Activated CD4-positive, alpha-beta T cell treated with anti-CD3 and anti-CD28 coated beads for 36 hours (primary cell): ENCODE measurements at regions of chr2 and their contacts with region 1.

Region 1: DNA sequence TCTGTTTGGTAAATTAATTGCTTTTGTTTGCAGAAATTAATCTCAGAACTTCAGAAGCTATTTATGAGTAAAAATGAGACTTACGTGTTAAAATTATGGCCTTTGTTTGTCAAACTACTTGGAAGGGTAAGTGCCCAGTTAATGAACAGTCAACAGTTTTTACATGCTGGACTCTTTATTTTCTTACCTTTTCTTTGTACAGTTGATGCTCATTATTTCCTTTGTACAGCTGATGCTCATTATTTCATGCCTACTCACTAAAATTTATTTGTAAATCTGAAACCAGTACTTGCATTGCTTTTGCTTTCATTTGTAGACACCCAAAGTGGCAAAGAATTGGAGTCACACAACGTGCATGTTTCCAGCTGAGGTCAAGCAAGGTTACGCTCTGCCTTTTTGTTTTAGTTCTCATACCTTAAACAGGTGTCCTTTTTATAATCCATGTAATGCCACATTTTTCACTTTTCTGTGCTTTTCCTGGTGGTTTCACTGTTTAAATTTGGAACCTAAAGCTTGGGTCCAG is 13.3 kb downstream of the RIF1 start:
- DNase-seq: peak; percentile 29
- ATAC-seq: peak; percentile 68
- H3K4me3 Mint-ChIP-seq: no peak overlapping the region
- H3K27ac Mint-ChIP-seq: peak overlapping the region; percentile 56
- H3K4me1 Mint-ChIP-seq: peaks cover 41% of the 10 kb centered on the region
- H3K27me3 Mint-ChIP-seq: no peaks in the 10 kb centered on the region

Region 2: DNA sequence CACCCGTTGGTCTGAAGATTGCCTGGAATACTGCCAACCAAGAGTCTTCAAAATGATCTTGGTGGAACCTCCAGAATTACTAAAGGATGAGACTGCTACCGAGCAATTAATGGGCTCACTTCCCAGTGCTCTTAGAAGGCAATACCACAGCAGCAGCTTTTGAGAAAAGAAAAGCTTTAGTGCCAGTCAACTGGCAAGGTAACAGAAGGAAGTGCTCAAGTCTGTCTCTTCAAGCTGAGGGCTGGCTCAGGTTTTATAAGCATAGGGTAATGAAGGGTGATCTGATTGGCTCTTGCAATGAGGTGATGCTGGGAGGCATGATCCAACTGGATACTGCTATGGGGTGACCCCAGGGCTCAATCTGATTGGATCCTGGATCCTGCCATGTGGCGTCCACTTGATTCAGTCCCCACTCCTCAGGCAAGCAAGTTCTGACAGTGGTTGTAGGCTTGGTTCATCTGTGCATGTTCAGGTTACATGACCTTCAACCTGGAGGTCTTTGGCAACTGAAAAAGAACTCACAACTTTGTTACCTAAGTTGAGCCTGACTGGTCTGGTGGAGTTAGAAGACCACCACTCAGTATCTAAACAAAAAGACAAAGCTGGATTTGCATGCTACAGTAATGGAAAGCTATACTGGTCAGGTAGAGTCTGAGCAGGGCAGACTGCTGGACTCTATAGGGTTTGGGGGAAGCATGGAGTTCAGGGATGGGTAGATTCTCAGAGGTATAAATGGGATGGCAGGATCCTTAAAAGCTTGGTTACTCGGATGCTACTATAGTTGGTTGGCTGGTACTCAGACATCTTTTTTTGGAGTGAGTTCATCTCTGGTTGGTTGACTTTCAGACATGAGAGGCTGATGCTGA is 27.2 kb before region 1 on chr2:
- CTCF ChIA-PET with region 1: no interaction called
- POLR2A ChIA-PET with region 1: no interaction called
- intact Hi-C with region 1: no loop called
- DNase-seq: no peak
- ATAC-seq: no peak
- H3K4me3 Mint-ChIP-seq: no peak overlapping the region
- H3K27ac Mint-ChIP-seq: no peak overlapping the region
- H3K4me1 Mint-ChIP-seq: no peaks in the 10 kb centered on the region
- H3K27me3 Mint-ChIP-seq: no peaks in the 10 kb centered on the region

Region 3: GRCh38 chr2:151437630-151438029 is 14.7 kb after region 1 on chr2:
- CTCF ChIA-PET with region 1: interaction called, 25 read pairs
- POLR2A ChIA-PET with region 1: interaction called, 4 read pairs
- intact Hi-C with region 1: no loop called
- DNase-seq: no peak
- ATAC-seq: peak; percentile 70
- H3K4me3 Mint-ChIP-seq: no peak overlapping the region
- H3K27ac Mint-ChIP-seq: no peak overlapping the region
- H3K4me1 Mint-ChIP-seq: peaks cover 2% of the 10 kb centered on the region
- H3K27me3 Mint-ChIP-seq: no peaks in the 10 kb centered on the region

Region 4: DNA sequence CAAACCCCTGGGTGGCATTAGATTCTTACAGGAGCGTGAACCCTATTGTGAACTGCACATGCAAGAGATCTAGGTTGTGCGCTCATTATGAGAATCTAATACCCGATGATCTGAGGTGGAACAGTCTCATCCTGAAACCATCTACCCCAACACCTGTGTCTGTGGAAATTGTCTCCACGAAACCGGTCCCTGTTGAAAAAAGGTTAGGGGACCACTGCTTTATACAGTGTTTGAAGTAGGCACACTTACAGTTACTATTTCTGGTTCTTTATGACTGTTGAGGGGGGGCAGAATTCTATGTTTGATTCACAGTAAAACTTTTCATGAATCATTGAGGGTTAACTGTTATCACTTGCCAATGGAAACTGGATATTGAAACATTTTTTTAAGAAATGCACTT is 58.8 kb after region 1 on chr2:
- CTCF ChIA-PET with region 1: no interaction called
- POLR2A ChIA-PET with region 1: no interaction called
- intact Hi-C with region 1: loop called in 1 of 2 experiments (anchors 5 kb)
- DNase-seq: peak; percentile 62
- ATAC-seq: peak; percentile 84
- H3K4me3 Mint-ChIP-seq: no peak overlapping the region
- H3K27ac Mint-ChIP-seq: peak overlapping the region; percentile 68
- H3K4me1 Mint-ChIP-seq: peaks cover 41% of the 10 kb centered on the region
- H3K27me3 Mint-ChIP-seq: no peaks in the 10 kb centered on the region